ENCODE measurements at regions of chr7 and their contacts with region 1.

Region 1: DNA sequence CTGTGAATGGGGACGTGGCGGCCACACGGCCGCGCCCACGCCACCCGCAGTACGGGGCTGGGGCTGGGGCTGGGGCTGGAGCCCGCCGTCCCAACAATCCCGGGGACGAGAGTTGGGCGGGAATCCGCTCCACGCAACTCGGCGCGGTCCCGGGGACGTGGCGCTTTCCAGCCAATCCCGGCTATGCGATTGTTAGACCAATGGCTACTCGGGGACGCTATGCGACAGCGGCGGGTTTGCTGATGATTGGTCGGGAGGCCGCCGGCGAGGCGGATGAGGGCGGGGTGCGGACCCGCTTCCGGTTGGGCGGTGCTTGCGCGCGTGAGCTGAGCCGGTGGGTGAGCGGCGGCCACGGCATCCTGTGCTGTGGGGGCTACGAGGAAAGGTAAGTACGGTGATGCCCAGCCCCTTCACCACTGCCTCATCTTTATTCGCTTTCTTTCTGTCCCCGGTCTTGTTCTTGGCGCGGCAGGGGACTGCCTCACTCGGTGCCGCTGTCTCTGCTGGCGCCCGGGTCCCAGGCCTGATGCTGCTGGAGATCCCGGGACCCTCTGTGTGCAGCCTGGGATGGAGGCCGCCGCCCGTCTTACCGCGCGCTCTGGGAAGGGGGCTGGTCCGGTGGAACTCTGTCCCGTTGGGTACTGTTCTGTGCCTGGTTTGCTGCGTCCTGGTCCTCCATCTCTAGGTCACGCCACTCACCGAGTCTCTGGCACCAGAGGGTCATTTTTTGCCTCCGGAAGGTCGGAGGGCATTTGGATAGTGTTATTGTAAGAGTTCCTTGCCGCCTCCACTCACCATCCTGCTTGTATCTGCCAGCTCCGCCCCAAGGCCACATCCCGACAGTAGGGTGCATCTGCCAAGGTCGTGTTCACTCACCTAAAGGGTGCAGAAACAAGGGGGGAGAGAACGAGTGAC is at the start of gene CALU:
- DNase-seq: peak; percentile 100
- ATAC-seq: peak; percentile 96
- H3K4me3 ChIP-seq: peak within 1 kb of the TSS; percentile 86
- H3K27ac ChIP-seq: peak within 1 kb of the TSS; percentile 90
- H3K4me1 ChIP-seq: peaks cover 19 to 57% of the 10 kb centered on the region in 2 experiments
- H3K27me3 ChIP-seq: no peaks in the 10 kb centered on the region
- CTCF ChIP-seq: no peak
- EP300 ChIP-seq: peak; percentile 46
- POLR2A ChIP-seq: peak; percentile 97
- RAD21 ChIP-seq: peak in 1 of 2 experiments; percentile 15; a peak in 1 of 4 replicates
- polyA plus RNA-seq, gene CALU: 215 to 286 TPM

Region 2: GRCh38 chr7:128076796-128077271 is 662.5 kb before region 1 on chr7:
- CTCF ChIA-PET with region 1: no interaction called
- POLR2A ChIA-PET with region 1: no interaction called
- in situ Hi-C with region 1: no loop called
- intact Hi-C with region 1: no loop called
- DNase-seq: no peak
- ATAC-seq: no peak
- H3K4me3 ChIP-seq: no peak overlapping the region
- H3K27ac ChIP-seq: no peak overlapping the region
- H3K4me1 ChIP-seq: peaks cover 0 to 12% of the 10 kb centered on the region in 2 experiments; a peak in 2 of 5 replicates
- H3K27me3 ChIP-seq: no peaks in the 10 kb centered on the region
- CTCF ChIP-seq: no peak
- EP300 ChIP-seq: no peak
- POLR2A ChIP-seq: no peak
- RAD21 ChIP-seq: no peak

Region 3: DNA sequence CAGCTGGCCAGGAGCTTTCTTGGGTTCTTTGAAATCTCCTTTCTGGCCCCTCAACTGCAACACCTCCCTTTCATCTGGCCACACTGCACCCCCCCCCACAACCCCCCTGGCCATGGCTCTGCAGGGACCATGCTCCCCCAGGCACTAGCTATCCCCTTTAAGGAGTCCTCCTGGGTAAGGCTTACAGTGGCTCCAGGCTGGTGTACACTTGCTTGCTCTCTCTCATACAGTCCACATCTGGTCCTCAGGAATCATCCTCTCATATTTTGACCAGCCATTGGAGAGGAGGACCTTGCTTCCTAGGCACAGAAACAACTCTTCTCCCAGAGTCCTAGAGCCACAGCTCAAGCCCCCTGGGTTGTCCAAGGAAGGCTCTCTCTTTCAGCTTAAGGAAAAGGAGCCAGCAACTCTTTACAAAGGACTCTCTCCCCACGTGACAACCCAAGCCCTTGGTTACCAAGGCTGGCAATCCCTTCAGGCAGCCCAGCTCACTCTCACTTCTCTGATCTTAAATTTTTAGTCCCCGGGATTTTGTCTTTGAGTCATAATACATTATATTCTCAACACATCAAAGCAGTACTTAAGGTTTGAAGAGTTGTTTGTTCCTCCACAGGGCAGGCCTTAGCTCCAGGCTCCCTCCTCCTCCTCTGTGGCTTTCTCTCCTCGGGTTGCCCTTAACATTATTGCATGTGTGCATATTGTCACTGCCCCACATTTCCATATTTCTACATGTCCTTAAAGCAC is 57.3 kb before region 1 on chr7:
- CTCF ChIA-PET with region 1: no interaction called
- POLR2A ChIA-PET with region 1: interaction called, 10 read pairs
- in situ Hi-C with region 1: no loop called
- intact Hi-C with region 1: no loop called
- DNase-seq: no peak
- ATAC-seq: peak; percentile 18; the same call in 1 of the 3 replicates
- H3K4me3 ChIP-seq: no peak overlapping the region
- H3K27ac ChIP-seq: no peak overlapping the region
- H3K4me1 ChIP-seq: peaks cover 5% of the 10 kb centered on the region in 2 experiments; a peak in 3 of 5 replicates
- H3K27me3 ChIP-seq: peaks cover 2 to 7% of the 10 kb centered on the region in 2 experiments; a peak in 2 of 5 replicates
- CTCF ChIP-seq: no peak
- EP300 ChIP-seq: no peak
- POLR2A ChIP-seq: no peak
- RAD21 ChIP-seq: no peak

Region 4: GRCh38 chr7:128728598-128728997 is 10.7 kb before region 1 on chr7:
- CTCF ChIA-PET with region 1: no interaction called
- POLR2A ChIA-PET with region 1: interaction called, 242 read pairs
- in situ Hi-C with region 1: no loop called
- intact Hi-C with region 1: no loop called
- DNase-seq: no peak
- ATAC-seq: no peak
- H3K4me3 ChIP-seq: no peak overlapping the region
- H3K27ac ChIP-seq: no peak overlapping the region
- H3K4me1 ChIP-seq: peaks cover 5 to 21% of the 10 kb centered on the region in 2 experiments
- H3K27me3 ChIP-seq: peaks cover 5 to 6% of the 10 kb centered on the region in 2 experiments; a peak in 1 of 5 replicates
- CTCF ChIP-seq: no peak
- EP300 ChIP-seq: no peak
- POLR2A ChIP-seq: no peak
- RAD21 ChIP-seq: no peak

Region 5: GRCh38 chr7:128770233-128770632 is 30.9 kb after region 1 on chr7:
- CTCF ChIA-PET with region 1: no interaction called
- POLR2A ChIA-PET with region 1: interaction called, 17 read pairs
- in situ Hi-C with region 1: no loop called
- intact Hi-C with region 1: no loop called
- DNase-seq: no peak
- ATAC-seq: no peak
- H3K4me3 ChIP-seq: no peak overlapping the region
- H3K27ac ChIP-seq: no peak overlapping the region
- H3K4me1 ChIP-seq: no peaks in the 10 kb centered on the region
- H3K27me3 ChIP-seq: no peaks in the 10 kb centered on the region
- CTCF ChIP-seq: no peak
- EP300 ChIP-seq: no peak
- POLR2A ChIP-seq: no peak
- RAD21 ChIP-seq: no peak

Region 6: GRCh38 chr7:128830231-128831177 is 91.2 kb after region 1 on chr7 and contains the start of gene FLNC:
- CTCF ChIA-PET with region 1: no interaction called
- POLR2A ChIA-PET with region 1: interaction called, 39 read pairs
- in situ Hi-C with region 1: no loop called
- intact Hi-C with region 1: loop called (anchors 1 kb)
- DNase-seq: peak; percentile 73 to 92 (median 82)
- ATAC-seq: peak; percentile 12
- H3K4me3 ChIP-seq: peak within 1 kb of the TSS; percentile 66
- H3K27ac ChIP-seq: peak within 1 kb of the TSS; percentile 90
- H3K4me1 ChIP-seq: peaks cover 46 to 74% of the 10 kb centered on the region in 2 experiments
- H3K27me3 ChIP-seq: no peaks in the 10 kb centered on the region
- CTCF ChIP-seq: no peak
- EP300 ChIP-seq: no peak
- POLR2A ChIP-seq: peak; percentile 73; the same call in 1 of the 2 replicates
- RAD21 ChIP-seq: peak in 1 of 2 experiments; percentile 15; a peak in 1 of 4 replicates
- polyA plus RNA-seq, gene FLNC: 0.90 to 1.1 TPM

Region 7: GRCh38 chr7:130021105-130021834 is 1282.0 kb after region 1 on chr7:
- CTCF ChIA-PET with region 1: no interaction called
- POLR2A ChIA-PET with region 1: no interaction called
- in situ Hi-C with region 1: no loop called
- intact Hi-C with region 1: loop called (anchors 5 kb)
- DNase-seq: no peak
- ATAC-seq: no peak
- H3K4me3 ChIP-seq: no peak overlapping the region
- H3K27ac ChIP-seq: no peak overlapping the region
- H3K4me1 ChIP-seq: peaks cover 6 to 18% of the 10 kb centered on the region in 2 experiments
- H3K27me3 ChIP-seq: no peaks in the 10 kb centered on the region
- CTCF ChIP-seq: no peak
- EP300 ChIP-seq: no peak
- POLR2A ChIP-seq: no peak
- RAD21 ChIP-seq: no peak

Measured in K562 (cell line).